Heart left ventricle (tissue), 16 donors: ENCODE measurements at regions of chr17 and their contacts with region 1.

Region 1: DNA sequence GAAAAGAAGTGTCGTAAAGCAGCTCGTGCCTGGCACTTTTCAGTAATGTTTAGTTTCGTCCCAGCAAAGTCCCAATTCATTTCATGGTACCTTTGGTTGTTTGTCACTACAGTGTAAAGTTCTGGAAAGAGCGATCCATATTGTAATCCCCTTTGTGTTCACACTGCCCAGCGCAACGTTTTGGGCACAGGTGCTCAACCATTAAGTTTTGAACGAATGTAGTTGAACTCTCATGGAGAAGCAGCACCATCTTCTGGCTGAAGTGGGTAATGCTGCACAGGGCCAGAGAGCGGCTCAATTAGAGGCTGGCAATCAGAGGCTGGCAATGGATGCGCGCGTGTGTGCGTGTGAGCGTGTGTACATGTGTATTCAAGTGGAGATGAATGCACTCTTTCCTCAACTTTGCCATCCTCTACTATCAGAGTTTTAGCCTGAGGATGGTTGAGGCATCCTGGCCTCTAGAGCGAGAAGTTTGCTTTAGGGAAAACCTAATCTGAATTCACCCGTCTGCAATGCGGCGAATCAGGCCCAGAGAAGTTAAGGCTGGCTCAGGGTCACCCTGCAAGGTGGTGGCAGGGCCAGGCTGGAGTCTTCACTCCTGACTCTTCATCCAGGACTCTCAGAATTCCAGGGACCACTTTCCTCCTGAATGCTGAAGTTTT is 29.9 kb downstream of the DYNLL2 start:
- DNase-seq: peak; percentile 61 to 79 (median 72)
- ATAC-seq: peak; percentile 66 to 90 (median 81)
- H3K4me3 ChIP-seq: no peak overlapping the region
- H3K27ac ChIP-seq: no peak overlapping the region
- H3K4me1 ChIP-seq: peaks cover 0 to 5% (median 0%) of the 10 kb centered on the region in 12 donors
- H3K27me3 ChIP-seq: peaks cover 0 to 19% (median 0%) of the 10 kb centered on the region in 9 donors
- CTCF ChIP-seq: peak; percentile 89 to 95 (median 94)
- POLR2A ChIP-seq: no peak

Region 2: DNA sequence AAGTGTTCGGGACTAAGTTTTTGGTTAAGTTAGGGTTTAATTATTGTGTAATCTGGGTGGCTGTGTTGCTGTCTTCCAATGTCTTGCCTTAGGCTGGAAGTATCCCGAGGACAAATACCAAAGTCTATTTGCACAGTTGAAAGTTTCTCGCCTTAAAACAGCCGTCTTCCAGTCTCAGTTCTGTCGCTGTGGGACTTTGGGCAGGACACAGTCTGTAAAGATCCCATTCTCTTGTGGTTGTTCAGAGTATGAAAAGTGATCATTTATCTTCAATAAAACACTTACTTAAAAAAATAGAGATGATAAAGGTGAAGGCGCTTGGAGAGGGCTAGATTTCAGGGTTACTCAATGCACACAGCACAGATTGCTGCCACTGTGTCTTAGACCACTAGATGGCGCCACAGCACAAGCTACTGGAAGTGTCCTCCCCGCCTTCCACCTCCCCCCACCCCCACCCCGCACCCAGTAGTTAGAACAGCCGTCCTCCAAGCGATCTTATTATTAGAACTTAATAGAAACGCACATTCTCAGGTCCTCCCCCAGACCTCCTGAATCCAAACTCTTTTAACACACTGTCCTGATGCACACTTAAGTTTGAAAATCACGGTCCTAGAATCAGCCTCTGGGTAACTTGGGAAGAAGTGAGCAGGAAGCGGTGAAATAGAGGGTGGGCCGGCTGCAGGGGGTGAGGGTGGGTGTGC is 982.2 kb before region 1 on chr17:
- intact Hi-C with region 1: loop called in 4 of 10 experiments (anchors 2 to 10 kb)
- DNase-seq: peak; percentile 79 to 87 (median 83)
- ATAC-seq: peak; percentile 89 to 93 (median 92)
- H3K4me3 ChIP-seq: peak overlapping the region in 2 of 12 donors; percentile 26 to 32
- H3K27ac ChIP-seq: no peak overlapping the region
- H3K4me1 ChIP-seq: peaks cover 0 to 7% (median 0%) of the 10 kb centered on the region in 12 donors
- H3K27me3 ChIP-seq: no peaks in the 10 kb centered on the region
- CTCF ChIP-seq: peak; percentile 85 to 95 (median 90)
- POLR2A ChIP-seq: no peak

Region 3: DNA sequence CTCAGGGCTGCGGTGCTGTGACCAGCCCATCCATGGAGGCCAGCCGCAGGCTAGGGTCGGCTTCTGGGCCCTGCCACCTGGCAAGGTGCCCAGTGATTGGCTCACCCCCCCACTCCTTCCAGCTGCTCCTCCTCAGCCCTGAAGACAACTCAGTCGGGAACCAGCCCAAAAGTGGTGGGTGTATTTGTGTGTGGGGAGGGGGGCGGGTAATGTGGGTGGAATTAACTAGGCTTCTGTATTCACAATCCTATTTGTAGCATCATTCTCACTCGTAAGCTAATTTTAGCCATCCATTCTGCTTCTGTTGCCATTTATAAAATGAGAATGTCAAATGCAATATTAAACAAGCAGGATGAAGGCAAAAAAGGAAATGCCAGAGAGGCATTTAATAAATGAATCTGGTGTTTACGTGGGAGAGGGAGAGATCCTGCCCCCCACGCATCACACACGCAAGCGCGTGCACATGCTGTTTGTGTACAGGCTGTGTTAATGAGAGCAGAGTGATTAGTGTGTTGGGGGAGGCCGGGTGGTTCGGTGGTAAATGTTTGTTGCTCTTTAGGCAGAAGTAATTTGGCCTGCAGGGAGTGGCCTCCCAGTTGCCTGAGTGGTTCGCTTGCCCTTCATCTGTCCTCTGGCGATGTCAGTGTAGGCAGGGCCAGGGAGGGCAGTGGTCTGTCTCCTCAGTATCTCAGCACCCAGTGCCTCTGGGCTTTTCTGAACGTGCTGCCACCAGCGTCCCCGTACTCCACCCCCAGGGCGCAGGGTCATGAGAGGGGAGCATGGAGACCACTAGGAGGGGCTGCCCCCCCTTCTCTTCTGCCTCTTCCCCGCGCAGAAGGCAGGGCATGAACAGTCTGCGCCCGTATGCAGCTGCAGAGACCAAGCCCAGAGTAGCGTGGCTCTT is 508.1 kb before region 1 on chr17:
- intact Hi-C with region 1: loop called in 1 of 10 experiments (anchors 10 kb)
- DNase-seq: peak in 4 of 5 donors; percentile 57 to 77 (median 63)
- ATAC-seq: peak; percentile 76 to 79 (median 79)
- H3K4me3 ChIP-seq: peak overlapping the region in 8 of 12 donors; percentile 2 to 29 (median 18)
- H3K27ac ChIP-seq: peak overlapping the region; percentile 66 to 95 (median 88)
- H3K4me1 ChIP-seq: peaks cover 3 to 65% (median 37%) of the 10 kb centered on the region in 12 donors
- H3K27me3 ChIP-seq: no peaks in the 10 kb centered on the region
- CTCF ChIP-seq: peak in 2 of 12 donors; percentile 3 to 17
- POLR2A ChIP-seq: no peak

Region 4: GRCh38 chr17:57861000-57861789 is 251.9 kb before region 1 on chr17:
- intact Hi-C with region 1: loop called (anchors 2 to 5 kb)
- DNase-seq: peak; percentile 65 to 79 (median 78)
- ATAC-seq: peak; percentile 10 to 64 (median 54)
- H3K4me3 ChIP-seq: peak overlapping the region; percentile 33 to 69 (median 56)
- H3K27ac ChIP-seq: peak overlapping the region; percentile 55 to 95 (median 82)
- H3K4me1 ChIP-seq: peaks cover 3 to 46% (median 36%) of the 10 kb centered on the region in 12 donors
- H3K27me3 ChIP-seq: no peaks in the 10 kb centered on the region
- CTCF ChIP-seq: no peak
- POLR2A ChIP-seq: no peak

Region 5: DNA sequence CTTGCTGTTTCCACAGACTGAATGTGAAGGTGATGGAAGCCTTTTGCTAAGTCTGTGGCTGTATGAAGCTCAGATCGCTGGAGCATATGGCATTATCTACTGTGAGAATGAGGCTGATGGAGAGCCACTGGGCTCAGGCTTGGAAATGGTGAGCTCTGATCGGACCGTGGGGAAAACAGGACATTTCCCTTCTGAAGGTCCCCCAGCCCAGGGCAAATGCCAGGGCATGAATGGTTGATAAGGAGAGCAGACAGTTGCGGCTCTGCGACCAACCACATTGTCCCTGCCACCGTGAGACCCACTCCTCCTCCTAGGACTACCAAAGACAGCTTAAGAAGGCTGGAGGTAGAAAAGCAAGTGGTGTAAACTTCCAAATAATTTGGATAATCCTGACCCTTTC is 153.2 kb before region 1 on chr17:
- intact Hi-C with region 1: no loop called
- DNase-seq: peak in 1 of 5 donors; percentile 6
- ATAC-seq: no peak
- H3K4me3 ChIP-seq: no peak overlapping the region
- H3K27ac ChIP-seq: no peak overlapping the region
- H3K4me1 ChIP-seq: peaks cover 0 to 15% (median 10%) of the 10 kb centered on the region in 12 donors
- H3K27me3 ChIP-seq: peaks cover 0 to 4% (median 0%) of the 10 kb centered on the region in 9 donors
- CTCF ChIP-seq: no peak
- POLR2A ChIP-seq: no peak

Region 6: DNA sequence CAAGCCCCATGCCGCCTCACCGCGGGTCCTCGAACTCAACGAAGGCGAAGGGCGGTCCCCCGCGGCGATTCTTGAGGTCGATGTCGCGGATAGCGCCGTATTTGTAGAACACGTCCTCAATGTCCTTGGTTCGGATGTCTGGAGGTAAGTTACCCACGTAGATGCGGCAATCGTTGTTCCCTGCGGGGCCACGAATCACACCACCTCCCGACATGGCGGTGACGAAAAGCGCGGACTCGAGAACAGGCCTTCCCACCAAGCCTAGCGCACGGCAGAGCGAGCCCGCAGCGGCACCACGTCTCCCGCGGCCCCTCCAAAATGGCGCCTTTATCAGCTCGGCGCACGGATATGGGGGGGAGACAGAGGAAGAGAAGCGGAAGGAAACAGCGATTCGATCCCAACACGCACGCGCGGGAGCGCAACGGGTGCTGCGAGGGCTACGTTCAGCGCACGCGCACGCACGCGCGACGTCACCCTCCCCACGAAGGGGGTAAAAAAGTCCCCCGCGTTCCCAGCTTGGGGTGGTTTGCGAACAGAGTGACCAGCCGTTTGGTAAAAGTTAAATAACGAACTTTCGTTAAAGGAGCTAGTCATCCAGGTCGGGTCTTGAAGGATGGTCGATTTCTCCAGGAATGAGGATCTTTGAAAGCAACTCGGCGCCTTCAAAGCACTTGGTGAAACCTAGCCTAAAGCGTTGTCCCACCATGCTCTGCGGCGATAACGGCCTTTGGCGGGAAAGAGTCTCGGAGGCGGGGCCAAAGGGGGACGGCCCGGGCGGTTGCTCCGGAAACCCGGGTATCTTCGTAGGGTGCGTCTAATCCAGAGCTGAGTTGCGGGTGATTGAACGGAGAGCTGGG is 105.9 kb before region 1 on chr17 and contains the start of gene SRSF1:
- intact Hi-C with region 1: loop called in 8 of 10 experiments (anchors 2 to 10 kb)
- DNase-seq: peak; percentile 98 to 99 (median 98)
- ATAC-seq: peak; percentile 95 to 98 (median 96)
- H3K4me3 ChIP-seq: peak within 1 kb of the TSS; percentile 68 to 96 (median 78)
- H3K27ac ChIP-seq: peak within 1 kb of the TSS; percentile 92 to 99 (median 96)
- H3K4me1 ChIP-seq: peaks cover 16 to 49% (median 38%) of the 10 kb centered on the region in 12 donors
- H3K27me3 ChIP-seq: no peaks in the 10 kb centered on the region
- CTCF ChIP-seq: no peak
- POLR2A ChIP-seq: peak; percentile 74 to 92
- total RNA-seq, gene SRSF1: 80.8 to 114 (median 99.7) TPM

Region 7: GRCh38 chr17:58184308-58184985 is 71.3 kb after region 1 on chr17:
- intact Hi-C with region 1: no loop called
- DNase-seq: no peak
- ATAC-seq: peak in 1 of 4 donors; percentile 37
- H3K4me3 ChIP-seq: no peak overlapping the region
- H3K27ac ChIP-seq: no peak overlapping the region
- H3K4me1 ChIP-seq: peaks cover 0 to under 1% (median 0%) of the 10 kb centered on the region in 12 donors
- H3K27me3 ChIP-seq: peaks cover 0 to 18% (median 0%) of the 10 kb centered on the region in 9 donors
- CTCF ChIP-seq: no peak
- POLR2A ChIP-seq: no peak